PC-3 (cell line): ENCODE measurements at regions of chr4 and their contacts with region 1.

Region 1: GRCh38 chr4:67668315-67668714 is 32.6 kb downstream of the UBA6 start:
- DNase-seq: no peak
- ATAC-seq: no peak
- H3K4me3 ChIP-seq: no peak overlapping the region
- H3K27ac ChIP-seq: no peak overlapping the region
- H3K4me1 ChIP-seq: no peaks in the 10 kb centered on the region
- H3K27me3 ChIP-seq: no peaks in the 10 kb centered on the region
- CTCF ChIP-seq: no peak

Region 2: DNA sequence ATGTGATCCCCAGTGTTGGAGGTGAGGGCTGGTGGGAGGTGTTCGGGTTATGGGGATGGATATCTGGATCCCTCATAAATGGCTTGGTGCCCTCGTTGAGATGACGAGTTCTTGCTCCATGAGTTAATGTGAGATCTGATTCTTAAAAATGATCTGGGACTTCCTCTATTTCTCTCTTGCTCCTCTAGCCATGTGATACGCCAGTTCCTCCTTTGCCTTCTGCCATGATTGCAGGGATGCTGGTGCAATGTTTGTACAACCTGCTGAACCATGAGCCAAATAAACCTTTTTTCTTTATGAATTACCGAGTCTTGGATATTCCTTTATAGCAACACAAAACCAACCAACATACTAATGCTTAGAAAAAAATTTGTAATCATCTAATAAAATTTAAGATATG is 53.2 kb before region 1 on chr4:
- CTCF ChIA-PET with region 1: no interaction called
- POLR2A ChIA-PET with region 1: interaction called, 4 read pairs
- intact Hi-C with region 1: loop called (anchors 5 kb)
- DNase-seq: no peak
- ATAC-seq: no peak
- H3K4me3 ChIP-seq: no peak overlapping the region
- H3K27ac ChIP-seq: no peak overlapping the region
- H3K4me1 ChIP-seq: peaks cover 16% of the 10 kb centered on the region
- H3K27me3 ChIP-seq: no peaks in the 10 kb centered on the region
- CTCF ChIP-seq: no peak

Region 3: DNA sequence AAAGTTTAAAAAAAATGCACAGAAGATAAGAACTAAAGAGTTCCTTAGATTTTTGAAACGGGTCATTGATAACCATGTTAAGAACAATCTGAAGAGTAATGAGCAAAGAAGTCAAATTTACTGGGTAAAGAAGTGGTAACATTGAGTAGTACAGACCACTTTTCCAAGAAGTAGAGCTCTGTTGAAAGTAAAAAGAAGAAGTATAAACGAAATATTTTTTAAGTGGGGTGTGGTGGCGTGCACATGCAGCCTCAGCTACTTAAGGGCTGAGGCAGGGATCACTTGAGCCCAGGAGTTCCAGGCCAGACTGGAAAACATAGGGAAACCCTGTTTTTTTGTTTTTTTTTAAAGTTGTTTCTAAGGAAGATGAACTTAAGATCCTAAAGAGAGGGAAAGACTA is 35.8 kb before region 1 on chr4:
- CTCF ChIA-PET with region 1: no interaction called
- POLR2A ChIA-PET with region 1: no interaction called
- intact Hi-C with region 1: no loop called
- DNase-seq: no peak
- ATAC-seq: no peak
- H3K4me3 ChIP-seq: no peak overlapping the region
- H3K27ac ChIP-seq: no peak overlapping the region
- H3K4me1 ChIP-seq: 0 out of 2 replicates have a peak, but pooled peaks cover 8% of the 10 kb centered on the region
- H3K27me3 ChIP-seq: no peaks in the 10 kb centered on the region
- CTCF ChIP-seq: no peak